Activated naive CD4-positive, alpha-beta T cell treated with anti-CD3 and anti-CD28 coated beads for 36 hours (primary cell): ENCODE measurements at regions of chr3 and their contacts with region 1.

Region 1: DNA sequence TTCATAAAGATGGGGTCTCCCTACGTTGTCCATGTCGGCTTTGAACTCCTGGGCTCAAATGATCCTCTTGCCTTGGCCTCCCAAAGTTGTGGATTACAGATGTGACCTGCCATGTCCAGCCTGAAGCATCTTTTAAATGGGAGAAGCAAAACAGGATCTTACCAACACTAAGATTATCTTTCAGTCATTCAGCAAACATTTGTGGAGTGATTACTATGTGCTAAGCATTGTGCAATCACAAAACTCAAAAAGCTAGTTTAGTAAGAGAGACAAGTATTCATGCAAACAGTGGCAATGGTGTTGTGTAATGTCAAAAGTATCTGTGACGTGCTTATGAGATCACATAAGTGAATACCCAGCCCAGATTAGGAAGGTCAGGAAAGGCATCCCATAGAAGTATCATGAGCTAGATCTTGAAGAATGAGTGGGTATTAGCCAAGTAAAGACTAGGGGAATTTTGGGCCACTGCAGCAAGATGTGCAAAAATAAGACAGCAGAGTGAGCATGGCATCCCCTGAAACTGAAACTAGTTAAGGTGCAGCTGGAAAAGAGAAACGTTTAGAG is 32.0 kb downstream of the SEC62 start:
- DNase-seq: no peak
- H3K4me3 Mint-ChIP-seq: no peak overlapping the region
- H3K27ac Mint-ChIP-seq: peak overlapping the region; percentile 83
- H3K4me1 Mint-ChIP-seq: peaks cover 40% of the 10 kb centered on the region
- H3K27me3 Mint-ChIP-seq: no peaks in the 10 kb centered on the region

Region 2: DNA sequence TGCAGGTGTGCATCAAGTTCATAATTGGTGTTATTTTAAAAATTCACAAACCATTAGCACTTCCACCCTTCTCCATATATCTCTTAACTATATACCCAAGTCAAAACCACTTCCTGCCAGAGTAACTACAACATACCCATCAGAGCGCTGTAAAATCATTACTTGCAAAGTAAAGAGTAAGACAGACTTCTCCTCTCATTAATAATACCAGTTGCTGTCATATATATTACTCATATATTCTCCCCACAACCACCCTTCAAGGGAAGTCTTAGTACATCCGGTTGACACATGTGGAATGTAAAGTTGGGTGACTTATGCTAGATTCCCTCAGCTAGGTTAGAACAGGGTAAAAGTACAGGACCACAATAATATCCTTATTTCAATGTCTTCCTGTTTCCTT is 239.4 kb before region 1 on chr3:
- CTCF ChIA-PET with region 1: interaction called, 5 read pairs
- intact Hi-C with region 1: loop called (anchors 1 kb)
- DNase-seq: peak; percentile 24
- H3K4me3 Mint-ChIP-seq: no peak overlapping the region
- H3K27ac Mint-ChIP-seq: peak overlapping the region; percentile 62
- H3K4me1 Mint-ChIP-seq: peaks cover 25% of the 10 kb centered on the region
- H3K27me3 Mint-ChIP-seq: no peaks in the 10 kb centered on the region

Region 3: GRCh38 chr3:169945313-169945712 is 53.3 kb before region 1 on chr3:
- CTCF ChIA-PET with region 1: no interaction called
- intact Hi-C with region 1: loop called (anchors 1 kb)
- DNase-seq: peak; percentile 84
- H3K4me3 Mint-ChIP-seq: peak overlapping the region; percentile 30
- H3K27ac Mint-ChIP-seq: peak overlapping the region; percentile 78
- H3K4me1 Mint-ChIP-seq: peaks cover 37% of the 10 kb centered on the region
- H3K27me3 Mint-ChIP-seq: no peaks in the 10 kb centered on the region

Region 4: GRCh38 chr3:169980055-169980454 is 18.6 kb before region 1 on chr3:
- CTCF ChIA-PET with region 1: no interaction called
- intact Hi-C with region 1: loop called (anchors 1 kb)
- DNase-seq: no peak
- H3K4me3 Mint-ChIP-seq: no peak overlapping the region
- H3K27ac Mint-ChIP-seq: peak overlapping the region; percentile 12
- H3K4me1 Mint-ChIP-seq: peaks cover 23% of the 10 kb centered on the region
- H3K27me3 Mint-ChIP-seq: no peaks in the 10 kb centered on the region

Region 5: DNA sequence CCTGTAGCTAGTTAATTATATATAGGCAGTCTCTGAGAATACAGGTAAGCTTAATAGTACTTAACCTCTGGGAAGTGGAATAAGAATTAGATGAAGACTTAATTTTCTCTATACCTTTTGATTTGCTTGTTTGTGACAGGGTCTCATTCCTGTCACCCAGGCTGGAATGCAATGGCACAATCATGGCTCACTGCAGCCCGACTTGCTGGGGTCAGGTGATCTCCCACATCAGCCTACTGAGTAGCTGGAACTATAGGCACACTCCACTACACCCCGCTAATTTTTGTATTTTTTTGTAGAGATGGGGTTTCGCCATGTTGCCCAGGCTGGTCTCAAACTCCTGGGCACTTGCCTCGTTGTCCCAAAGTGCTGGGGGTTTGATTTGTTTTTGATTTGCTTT is 12.0 kb before region 1 on chr3:
- CTCF ChIA-PET with region 1: interaction called, 3 read pairs
- intact Hi-C with region 1: loop called (anchors 1 kb)
- DNase-seq: no peak
- H3K4me3 Mint-ChIP-seq: no peak overlapping the region
- H3K27ac Mint-ChIP-seq: peak overlapping the region; percentile 59
- H3K4me1 Mint-ChIP-seq: peaks cover 8% of the 10 kb centered on the region
- H3K27me3 Mint-ChIP-seq: no peaks in the 10 kb centered on the region

Region 6: GRCh38 chr3:170021083-170021482 is 22.4 kb after region 1 on chr3:
- CTCF ChIA-PET with region 1: interaction called, 3 read pairs
- intact Hi-C with region 1: loop called (anchors 1 kb)
- DNase-seq: no peak
- H3K4me3 Mint-ChIP-seq: no peak overlapping the region
- H3K27ac Mint-ChIP-seq: no peak overlapping the region
- H3K4me1 Mint-ChIP-seq: peaks cover 21% of the 10 kb centered on the region
- H3K27me3 Mint-ChIP-seq: no peaks in the 10 kb centered on the region

Region 7: DNA sequence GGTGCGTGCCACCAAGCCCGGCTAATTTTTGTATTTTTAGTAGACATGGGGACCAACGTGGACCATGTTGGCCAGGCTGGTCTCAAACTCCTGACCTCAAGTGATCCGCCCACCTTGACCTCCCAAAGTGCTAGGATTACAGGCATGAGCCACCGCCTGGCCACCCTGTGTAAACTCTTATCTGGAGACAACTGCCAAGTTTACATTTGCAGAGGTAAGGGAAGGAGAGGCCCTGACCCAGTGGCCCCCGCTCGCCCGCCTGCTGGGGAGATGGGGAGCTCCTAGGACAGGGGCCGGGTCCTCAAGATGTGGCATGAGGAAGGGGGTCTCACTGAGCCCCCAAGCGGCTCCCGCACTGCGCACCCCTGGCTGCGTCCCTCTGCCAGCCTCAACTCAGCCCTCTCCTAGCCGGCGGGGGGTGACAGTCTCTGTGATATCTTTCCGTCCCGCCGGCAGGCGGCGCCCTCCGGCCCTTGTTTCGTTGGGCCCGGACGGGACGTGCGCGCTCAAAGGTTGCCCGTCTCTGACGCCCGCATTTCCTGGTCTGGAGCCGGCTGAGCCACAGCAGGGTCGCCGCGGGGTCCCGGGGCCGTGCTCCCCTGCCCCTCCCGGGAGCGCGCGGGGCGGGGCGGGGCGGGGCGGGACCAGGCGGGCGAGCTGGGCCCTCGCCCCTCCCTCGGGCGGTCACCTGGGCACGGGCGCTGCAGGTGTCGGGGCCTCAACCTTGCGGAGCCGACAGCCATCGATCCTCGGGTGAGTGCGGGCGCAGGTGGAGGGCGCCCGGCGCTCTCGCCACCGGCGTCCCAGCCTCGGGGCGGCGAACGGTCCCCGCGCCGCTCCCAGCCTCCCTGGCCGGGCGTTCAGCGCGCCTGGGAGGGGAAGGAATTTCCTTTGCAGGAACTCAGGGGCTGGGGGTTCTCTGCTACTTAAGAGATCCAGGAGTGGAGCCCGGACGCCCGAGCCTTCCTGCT is 39.1 kb after region 1 on chr3 and contains the start of gene GPR160:
- CTCF ChIA-PET with region 1: no interaction called
- intact Hi-C with region 1: loop called (anchors 1 kb)
- DNase-seq: peak; percentile 89
- H3K4me3 Mint-ChIP-seq: peak within 1 kb of the TSS; percentile 84
- H3K27ac Mint-ChIP-seq: no peak within 1 kb of the TSS
- H3K4me1 Mint-ChIP-seq: peaks cover 24% of the 10 kb centered on the region
- H3K27me3 Mint-ChIP-seq: no peaks in the 10 kb centered on the region
- total RNA-seq, gene GPR160: 10.3 TPM